ENCODE measurements at regions of chr17 and their contacts with region 1.

Region 1: GRCh38 chr17:40559954-40560591 is 5.2 kb downstream of the CCR7 start:
- DNase-seq: peak; percentile 92 to 94
- H3K4me3 ChIP-seq: no peak overlapping the region
- H3K27ac ChIP-seq: peak overlapping the region; percentile 25 to 49
- H3K4me1 ChIP-seq: peaks cover 0 to 31% (median 8%) of the 10 kb centered on the region in 4 donors
- H3K27me3 ChIP-seq: peaks cover 0 to 14% of the 10 kb centered on the region in 2 donors
- CTCF ChIP-seq: peak; percentile 96 to 98

Region 2: DNA sequence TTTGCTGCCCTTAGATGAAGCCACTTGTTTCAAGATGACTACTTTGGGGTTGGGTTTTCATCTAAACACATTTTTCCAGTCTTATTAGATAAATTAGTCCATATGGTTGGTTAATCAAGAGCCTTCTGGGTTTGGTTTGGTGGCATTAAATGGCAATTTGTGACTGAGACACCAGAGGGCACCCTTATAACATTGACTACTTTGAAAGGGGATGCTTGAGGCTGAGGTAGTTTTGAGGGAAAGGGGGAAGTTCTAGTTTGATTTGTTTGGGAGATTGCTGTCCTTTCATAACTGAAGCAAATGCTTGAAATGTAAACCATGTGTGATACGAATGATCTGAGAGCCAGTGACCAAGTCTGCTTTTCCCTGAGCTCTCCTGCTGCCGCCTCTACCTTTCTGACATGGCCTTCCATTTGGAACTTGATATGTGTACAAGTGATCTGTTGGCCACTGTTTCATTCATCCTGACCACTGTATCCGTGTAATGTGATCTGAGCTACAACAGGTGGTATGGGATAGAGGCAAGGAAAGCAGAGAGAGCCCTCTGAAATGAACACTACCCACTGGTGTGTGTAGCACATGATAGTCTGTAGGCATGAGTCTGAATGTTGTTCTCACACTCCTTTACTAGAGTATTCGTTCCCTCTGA is 256.9 kb before region 1 on chr17:
- intact Hi-C with region 1: loop called (anchors 10 kb)
- DNase-seq: peak in 1 of 2 donors; percentile 65
- H3K4me3 ChIP-seq: no peak overlapping the region
- H3K27ac ChIP-seq: no peak overlapping the region
- H3K4me1 ChIP-seq: peaks cover 0 to 32% (median 18%) of the 10 kb centered on the region in 4 donors
- H3K27me3 ChIP-seq: no peaks in the 10 kb centered on the region
- CTCF ChIP-seq: peak; percentile 75 to 88

Region 3: DNA sequence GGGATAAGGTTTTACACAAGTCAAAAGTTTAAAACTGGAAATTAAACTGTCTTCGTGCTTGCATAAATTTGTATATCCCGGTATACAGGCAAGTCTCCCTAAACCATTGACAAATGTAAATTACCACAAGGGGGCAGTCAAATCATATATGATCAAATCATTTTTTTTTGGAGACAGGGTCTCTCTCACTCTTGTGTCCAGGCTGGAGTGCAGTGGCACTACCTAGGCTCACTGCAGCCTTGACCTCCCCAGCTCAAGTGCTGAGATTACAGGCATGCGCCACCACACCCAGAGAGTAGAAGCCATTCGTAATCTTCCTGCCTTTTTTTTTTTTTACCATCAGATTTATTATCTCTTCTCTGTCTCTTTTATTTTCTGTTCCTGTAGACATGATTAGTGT is 160.9 kb before region 1 on chr17:
- intact Hi-C with region 1: loop called (anchors 2 kb)
- DNase-seq: no peak
- H3K4me3 ChIP-seq: no peak overlapping the region
- H3K27ac ChIP-seq: no peak overlapping the region
- H3K4me1 ChIP-seq: no peaks in the 10 kb centered on the region
- H3K27me3 ChIP-seq: no peaks in the 10 kb centered on the region
- CTCF ChIP-seq: peak; percentile 53 to 62

Region 4: DNA sequence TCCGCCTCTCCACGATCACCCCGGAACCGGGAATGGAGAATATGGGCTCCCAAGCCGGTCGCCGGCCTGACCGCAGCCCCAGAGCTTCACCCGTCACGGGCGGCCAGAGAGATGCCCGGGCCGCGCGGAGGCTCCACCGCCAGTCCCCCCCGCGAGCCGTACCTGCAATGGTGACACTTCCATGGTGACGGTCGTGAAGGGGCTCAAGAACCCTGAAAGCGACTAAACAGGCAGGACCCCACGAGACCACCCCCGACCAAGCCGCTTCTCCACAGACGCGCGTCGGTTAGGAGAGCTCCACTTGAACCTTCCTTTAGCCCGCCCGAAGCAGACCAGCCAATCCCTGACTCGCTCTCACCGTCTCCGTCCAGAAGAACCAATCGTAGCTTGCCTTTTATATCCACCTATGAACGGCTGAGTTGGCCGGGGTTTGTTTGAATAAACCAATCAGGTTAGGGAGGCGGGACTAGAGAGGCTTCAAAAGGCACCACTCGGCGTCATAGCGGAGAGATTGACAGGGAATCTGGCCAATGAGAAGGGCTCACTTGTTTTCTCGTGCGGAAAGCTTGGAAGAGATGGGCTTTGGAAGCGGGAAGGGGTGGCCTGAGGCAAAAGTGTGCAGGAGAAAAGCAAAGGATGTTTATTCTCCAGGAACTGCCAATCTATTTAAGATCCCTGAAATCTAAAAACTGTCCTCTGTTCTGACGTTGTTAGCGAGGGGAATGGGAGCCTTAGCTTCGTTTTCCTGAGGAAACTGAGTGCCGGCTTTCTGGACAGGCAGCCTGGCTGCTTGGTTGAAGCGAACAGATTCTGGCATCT is 142.3 kb before region 1 on chr17 and contains the start of gene TOP2A:
- intact Hi-C with region 1: no loop called
- DNase-seq: peak; percentile 98 to 99
- H3K4me3 ChIP-seq: peak within 1 kb of the TSS; percentile 52 to 63
- H3K27ac ChIP-seq: peak within 1 kb of the TSS; percentile 59 to 70
- H3K4me1 ChIP-seq: peaks cover 0 to 13% (median 11%) of the 10 kb centered on the region in 4 donors
- H3K27me3 ChIP-seq: peaks cover 0 to 5% of the 10 kb centered on the region in 2 donors
- CTCF ChIP-seq: peak in 1 of 2 experiments; percentile 24

Region 5: GRCh38 chr17:40443583-40444327 is 116.3 kb before region 1 on chr17:
- intact Hi-C with region 1: loop called (anchors 5 kb)
- DNase-seq: peak; percentile 79 to 92
- H3K4me3 ChIP-seq: peak overlapping the region; percentile 59 to 67
- H3K27ac ChIP-seq: peak overlapping the region; percentile 94
- H3K4me1 ChIP-seq: peaks cover 0 to 61% (median 48%) of the 10 kb centered on the region in 4 donors
- H3K27me3 ChIP-seq: no peaks in the 10 kb centered on the region
- CTCF ChIP-seq: peak; percentile 35 to 50

Region 6: GRCh38 chr17:40598663-40599467 is 38.8 kb after region 1 on chr17:
- intact Hi-C with region 1: no loop called
- DNase-seq: peak; percentile 47 to 90
- H3K4me3 ChIP-seq: peak overlapping the region in 1 of 2 donors; percentile 20
- H3K27ac ChIP-seq: peak overlapping the region; percentile 74 to 78
- H3K4me1 ChIP-seq: peaks cover 0 to 21% (median 10%) of the 10 kb centered on the region in 4 donors
- H3K27me3 ChIP-seq: no peaks in the 10 kb centered on the region
- CTCF ChIP-seq: no peak

Region 7: DNA sequence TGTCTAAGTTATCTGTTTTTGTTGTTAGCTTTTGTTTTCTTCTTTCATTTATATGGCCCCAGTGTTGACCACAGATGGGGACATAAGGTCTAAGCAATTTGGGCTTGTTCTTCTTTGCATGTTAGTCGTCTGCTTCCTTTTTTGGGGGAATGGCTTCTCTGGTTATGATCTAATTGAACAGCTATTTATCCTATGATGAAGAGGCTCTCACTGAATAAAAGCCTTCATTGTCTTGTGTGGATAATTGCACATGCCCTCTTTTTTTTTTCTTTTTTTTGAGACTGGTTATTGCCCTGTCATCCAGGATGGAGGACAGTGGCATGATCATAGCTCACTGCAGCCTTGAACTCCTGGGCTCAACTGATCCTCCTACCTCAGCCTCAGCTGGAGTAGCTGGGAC is 73.8 kb after region 1 on chr17:
- intact Hi-C with region 1: no loop called
- DNase-seq: no peak
- H3K4me3 ChIP-seq: no peak overlapping the region
- H3K27ac ChIP-seq: no peak overlapping the region
- H3K4me1 ChIP-seq: no peaks in the 10 kb centered on the region
- H3K27me3 ChIP-seq: no peaks in the 10 kb centered on the region
- CTCF ChIP-seq: no peak

Region 8: GRCh38 chr17:40645943-40646342 is 85.9 kb after region 1 on chr17:
- intact Hi-C with region 1: no loop called
- DNase-seq: no peak
- H3K4me3 ChIP-seq: peak overlapping the region in 1 of 2 donors; percentile 77
- H3K27ac ChIP-seq: no peak overlapping the region
- H3K4me1 ChIP-seq: peaks cover 0 to 31% (median 24%) of the 10 kb centered on the region in 4 donors
- H3K27me3 ChIP-seq: no peaks in the 10 kb centered on the region
- CTCF ChIP-seq: no peak

Measured in tibial artery (tissue), 4 donors.